ENCODE measurements at regions of chr11 and their contacts with region 1.

Region 1: DNA sequence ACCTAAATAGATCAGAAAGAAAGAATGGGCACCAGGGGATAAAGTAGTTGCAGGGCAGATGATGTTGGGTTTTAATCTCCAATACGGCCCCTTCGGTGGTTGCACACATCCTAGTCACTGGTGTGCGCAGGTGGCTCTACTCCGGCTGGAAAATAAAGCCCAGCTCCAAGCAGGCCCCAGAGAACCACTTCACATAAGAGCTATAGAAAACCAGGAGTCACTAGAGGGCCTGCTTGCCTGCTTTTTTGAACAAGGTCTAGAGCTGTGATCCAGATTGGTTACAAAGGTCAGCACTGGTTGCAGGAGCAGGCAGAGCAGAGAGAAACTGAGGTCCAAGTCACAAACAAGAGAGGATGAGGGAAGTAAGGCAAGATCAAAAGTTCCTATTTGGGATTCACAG is 41.5 kb upstream of the MS4A8 start:
- DNase-seq: no peak
- H3K4me3 ChIP-seq: no peak overlapping the region
- H3K27ac ChIP-seq: no peak overlapping the region
- H3K4me1 ChIP-seq: no peaks in the 10 kb centered on the region
- H3K27me3 ChIP-seq: peaks cover 23% of the 10 kb centered on the region; the same call in 1 of the 2 replicates
- CTCF ChIP-seq: no peak

Region 2: DNA sequence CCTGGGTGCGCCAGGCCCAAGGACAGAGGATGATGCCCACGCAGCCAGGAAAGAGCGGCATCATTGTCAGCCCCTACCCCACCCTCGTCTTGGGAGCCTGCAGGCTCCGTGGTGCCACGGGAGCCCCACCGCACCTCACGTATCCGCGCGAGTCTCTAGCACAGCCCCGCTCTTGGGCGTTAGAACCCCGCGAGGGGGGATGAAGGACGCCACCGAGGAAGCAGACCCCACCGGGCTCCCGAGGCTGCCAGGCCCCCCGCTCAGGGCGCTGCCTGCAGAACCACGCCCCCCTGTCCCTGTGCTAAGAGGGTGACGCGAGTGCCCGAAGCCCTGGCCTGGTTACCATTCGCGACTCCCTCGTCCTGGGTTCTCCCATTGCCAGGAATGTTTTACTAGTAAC is 10.8 kb before region 1 on chr11:
- CTCF ChIA-PET with region 1: no interaction called
- POLR2A ChIA-PET with region 1: interaction called, 12 read pairs
- intact Hi-C with region 1: no loop called
- DNase-seq: no peak
- H3K4me3 ChIP-seq: no peak overlapping the region
- H3K27ac ChIP-seq: no peak overlapping the region
- H3K4me1 ChIP-seq: no peaks in the 10 kb centered on the region
- H3K27me3 ChIP-seq: no peaks in the 10 kb centered on the region
- CTCF ChIP-seq: no peak

Region 3: DNA sequence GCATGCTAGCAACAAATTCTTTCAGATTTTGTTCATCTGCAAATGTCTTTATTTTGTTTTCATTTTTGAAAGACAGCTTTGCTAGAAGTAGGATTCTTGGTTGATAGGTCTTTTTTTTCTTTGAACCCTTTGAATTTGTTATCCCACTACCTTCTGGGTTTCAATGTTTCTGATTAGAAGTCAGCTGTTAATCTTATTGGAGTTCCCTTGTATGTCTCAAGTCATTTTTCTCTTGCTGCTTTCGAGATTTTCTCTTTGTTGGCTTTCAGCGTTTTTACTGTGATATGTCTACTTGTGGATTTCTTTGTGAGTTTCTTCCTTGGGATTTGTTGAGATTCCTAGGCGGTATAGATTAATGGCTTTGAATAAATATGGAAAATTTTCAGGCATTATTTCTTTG is 14.4 kb after region 1 on chr11:
- CTCF ChIA-PET with region 1: no interaction called
- POLR2A ChIA-PET with region 1: no interaction called
- intact Hi-C with region 1: no loop called
- DNase-seq: no peak
- H3K4me3 ChIP-seq: no peak overlapping the region
- H3K27ac ChIP-seq: no peak overlapping the region
- H3K4me1 ChIP-seq: no peaks in the 10 kb centered on the region
- H3K27me3 ChIP-seq: peaks cover 4% of the 10 kb centered on the region; the same call in 1 of the 2 replicates
- CTCF ChIP-seq: no peak